Cardiac septum (tissue), 1 donor: ENCODE measurements at regions of chr19 and their contacts with region 1.

Region 1: DNA sequence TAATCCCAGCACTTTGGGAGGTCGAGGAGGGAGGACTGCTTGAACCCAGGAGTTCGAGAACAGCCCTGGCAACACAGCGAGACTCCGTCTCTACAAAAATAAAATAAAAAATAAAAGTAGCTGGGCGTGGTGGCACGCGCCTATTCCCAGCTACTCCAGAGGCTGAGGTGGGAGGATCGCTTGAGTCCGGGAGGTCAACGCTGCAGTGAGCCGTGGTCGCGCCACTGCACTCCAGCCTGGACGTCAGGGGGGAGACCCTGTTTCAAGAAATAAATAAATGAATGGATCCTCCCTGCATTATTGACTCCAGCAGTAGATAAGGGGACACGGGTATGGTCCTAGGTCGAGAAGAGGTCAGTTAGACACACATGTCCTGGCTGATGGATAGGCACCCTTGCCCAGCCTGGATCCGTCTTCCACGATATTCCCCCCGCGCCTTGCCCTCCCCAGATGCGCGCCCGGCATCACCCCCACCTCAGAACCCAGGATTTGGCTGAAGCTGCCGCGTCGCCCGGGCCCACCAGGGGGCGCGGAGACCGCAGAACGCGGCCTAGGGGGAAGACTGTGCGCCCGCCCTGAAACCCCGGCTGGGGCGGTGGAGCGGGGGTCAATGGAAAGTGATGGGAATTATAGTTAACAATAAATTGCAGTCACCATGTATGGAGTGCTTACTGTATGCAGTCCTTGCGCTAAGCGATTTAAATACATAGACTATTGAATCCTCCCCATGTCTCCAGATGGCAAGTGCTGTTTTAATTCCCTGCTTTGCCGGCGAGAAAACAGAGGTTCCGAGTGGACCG is 2.1 kb upstream of the HOOK2 start:
- DNase-seq: peak; percentile 92

Region 2: GRCh38 chr19:12689581-12690216 is 87.7 kb before region 1 on chr19:
- intact Hi-C with region 1: no loop called
- DNase-seq: no peak

Region 3: DNA sequence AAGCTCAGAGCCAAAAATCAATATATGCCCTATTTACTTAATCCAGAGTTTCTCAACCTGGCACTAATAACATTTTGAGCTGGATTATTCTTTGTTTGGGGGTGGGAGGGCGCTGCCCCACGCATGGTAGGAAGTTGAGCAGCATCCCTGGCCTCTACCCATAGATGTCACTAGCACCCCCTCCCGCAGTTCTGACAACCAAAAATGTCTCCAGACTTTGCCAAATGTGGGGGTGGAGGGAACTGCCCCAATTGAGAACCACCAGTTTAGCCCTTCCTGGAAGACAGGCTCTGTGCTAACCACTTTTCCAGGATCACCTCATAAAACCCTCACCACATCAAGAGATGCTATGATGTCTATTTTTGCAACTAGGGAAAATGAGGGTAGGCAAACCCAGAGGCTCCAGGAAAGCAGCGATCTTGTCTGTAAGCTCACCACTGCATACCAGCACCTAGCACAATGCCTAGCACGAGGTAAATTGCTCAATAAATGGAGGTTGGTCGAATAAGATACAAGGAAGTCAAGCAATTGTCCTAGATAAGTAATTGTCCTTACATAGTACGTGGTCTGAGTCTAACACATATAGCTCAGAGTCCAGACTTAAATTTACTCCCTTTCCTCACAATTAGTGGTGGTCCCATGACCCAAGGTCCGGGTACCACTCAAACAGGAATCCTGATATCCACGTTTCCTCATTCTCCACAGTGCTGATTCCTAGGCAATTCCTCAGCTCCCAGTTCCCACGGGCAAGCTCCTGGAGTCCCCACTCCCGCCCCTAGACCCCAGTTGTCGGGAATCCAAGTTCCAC is 43.8 kb before region 1 on chr19:
- intact Hi-C with region 1: loop called (anchors 1 kb)
- DNase-seq: no peak

Region 4: DNA sequence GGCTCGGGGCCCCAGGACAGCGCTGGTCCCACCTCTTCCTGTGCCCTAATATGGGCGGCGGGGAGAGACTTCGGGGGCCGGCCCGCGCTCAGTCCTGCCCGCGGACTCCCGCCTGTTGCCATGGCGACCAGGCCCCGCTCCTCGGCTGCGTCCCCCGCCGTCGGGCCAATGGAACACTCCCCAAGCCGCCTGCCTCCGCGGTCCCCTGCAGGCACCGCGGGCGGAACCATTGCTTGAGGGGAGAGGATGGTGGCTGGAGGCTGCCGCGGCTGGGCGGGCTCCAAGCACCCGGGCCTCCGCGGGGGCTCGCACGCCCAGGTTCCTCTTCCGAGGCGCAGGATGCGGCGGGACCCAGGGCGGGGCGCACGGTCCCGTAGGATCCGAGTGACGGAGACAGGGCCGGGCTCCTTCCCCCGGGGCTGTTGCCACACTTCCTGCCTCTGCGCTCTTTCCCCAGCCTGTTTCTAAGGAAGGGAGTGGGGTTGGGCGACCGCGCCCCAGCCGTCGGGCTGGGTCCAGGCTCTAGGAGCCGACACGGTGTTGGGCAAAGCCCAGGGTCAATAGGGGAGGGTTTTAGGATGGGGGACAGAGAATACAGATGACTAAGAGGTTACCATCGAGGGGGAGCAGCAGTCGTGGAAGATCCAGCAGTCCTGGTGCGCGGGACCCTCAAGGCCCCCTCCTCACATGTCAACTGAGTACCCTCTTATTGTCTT is 12.6 kb after region 1 on chr19:
- intact Hi-C with region 1: loop called (anchors 1 kb)
- DNase-seq: peak; percentile 99

Region 5: DNA sequence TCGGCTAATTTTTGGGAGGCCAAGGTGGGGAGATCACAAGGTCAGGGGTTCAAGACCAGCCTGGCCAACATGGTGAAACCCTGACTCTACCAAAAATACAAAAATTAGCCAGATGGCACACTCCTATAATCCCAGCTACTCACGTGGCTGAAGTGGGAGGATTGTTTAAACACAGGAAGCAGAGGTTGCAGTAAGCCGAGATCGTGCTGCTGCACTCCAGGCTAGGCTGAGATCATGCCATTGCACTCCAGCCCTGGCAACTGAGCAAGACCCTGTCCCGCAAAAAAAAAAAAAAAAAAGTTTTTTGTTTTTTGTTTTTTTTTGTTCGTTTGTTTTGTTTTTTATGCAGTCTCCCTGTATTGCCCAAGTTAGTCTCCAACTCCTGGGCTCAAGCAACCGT is 82.1 kb after region 1 on chr19:
- intact Hi-C with region 1: no loop called
- DNase-seq: no peak

Region 6: DNA sequence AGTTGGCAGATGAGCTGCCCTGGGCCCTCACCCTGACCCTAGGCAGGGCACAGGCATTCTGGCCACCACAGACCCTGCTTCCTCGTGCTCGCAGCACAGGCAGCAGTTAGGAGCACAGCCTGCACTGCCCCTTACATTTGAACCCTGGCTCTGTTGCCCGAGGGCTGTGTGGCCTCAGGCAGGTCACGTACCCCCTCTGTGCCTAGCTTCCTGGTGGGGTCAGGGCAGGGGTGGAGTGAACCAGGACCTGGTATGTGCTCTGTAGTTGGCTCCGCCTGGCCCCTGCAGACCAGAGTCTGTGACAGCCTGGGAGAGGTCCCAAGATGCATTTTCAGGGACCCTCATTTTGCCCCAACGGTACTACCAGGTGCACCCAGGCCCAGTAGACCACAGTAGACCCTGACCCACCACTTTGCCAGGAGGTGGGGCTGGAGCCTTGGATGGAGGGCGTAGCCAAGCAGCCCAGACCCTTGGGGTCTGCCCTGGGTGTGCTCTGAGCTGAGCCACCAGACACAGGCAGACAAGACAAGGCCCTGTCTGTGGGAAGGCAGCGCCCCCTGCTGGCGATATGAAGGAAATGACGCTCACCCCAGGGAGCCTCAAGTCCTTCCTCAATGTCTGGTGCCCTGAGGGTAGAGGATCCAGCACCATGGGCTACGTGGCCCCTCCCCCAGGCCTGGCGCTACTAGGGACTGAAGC is 316.1 kb after region 1 on chr19:
- intact Hi-C with region 1: no loop called
- DNase-seq: peak; percentile 94